CD4-positive, alpha-beta memory T cell (primary cell): ENCODE measurements at regions of chr1 and their contacts with region 1.

Region 1: DNA sequence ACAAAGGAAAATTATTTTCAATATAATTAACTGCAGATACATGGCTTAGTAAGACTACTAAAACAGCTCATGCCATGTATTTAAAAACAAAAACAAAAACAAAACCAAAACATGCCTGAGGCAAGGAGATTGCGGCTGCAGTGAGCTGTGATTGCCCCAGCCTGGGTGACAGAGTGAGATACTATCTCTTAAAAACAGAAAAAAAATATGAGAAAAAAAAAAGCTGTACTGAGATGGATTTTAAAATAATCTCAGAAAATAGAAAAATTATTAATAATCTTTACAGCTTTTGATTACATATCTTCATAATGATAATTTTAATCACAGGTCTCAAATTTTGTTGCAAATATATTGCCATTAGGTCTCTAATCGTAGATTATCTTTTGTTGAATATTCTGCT is 24.0 kb upstream of the LIN9 start:
- DNase-seq: peak in 2 of 5 donors; percentile 10 to 14
- H3K4me3 ChIP-seq: no peak overlapping the region
- H3K4me3 Mint-ChIP-seq: peak overlapping the region; percentile 45 to 81 (median 66)
- H3K27ac ChIP-seq: no peak overlapping the region
- H3K27ac Mint-ChIP-seq: peak overlapping the region in 6 of 7 donors; percentile 28 to 84 (median 61)
- H3K4me1 ChIP-seq: peaks cover 3% of the 10 kb centered on the region
- H3K4me1 Mint-ChIP-seq: peaks cover 6 to 9% (median 8%) of the 10 kb centered on the region in 4 donors
- H3K27me3 ChIP-seq: no peaks in the 10 kb centered on the region
- H3K27me3 Mint-ChIP-seq: peaks cover 0 to 2% of the 10 kb centered on the region in 2 donors

Region 2: DNA sequence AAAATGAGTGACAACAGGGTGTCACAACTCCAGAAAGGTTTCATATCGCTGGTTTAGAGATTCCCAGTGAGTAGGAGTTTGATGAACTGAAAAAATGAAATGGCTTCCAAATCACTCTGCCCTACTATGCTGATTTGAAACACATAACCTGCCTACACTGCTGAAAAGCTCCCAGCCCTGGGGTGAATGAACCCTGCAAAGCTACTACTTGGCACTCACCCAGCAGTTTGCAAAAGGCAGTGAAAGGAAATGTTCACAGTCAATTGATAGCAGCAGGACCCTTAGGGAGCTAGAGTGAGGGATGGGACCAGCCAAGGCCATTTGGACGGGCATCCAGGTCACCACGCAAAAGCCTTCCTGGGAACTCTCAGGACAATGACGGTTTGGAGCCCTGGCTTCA is 599.7 kb before region 1 on chr1:
- CTCF ChIA-PET with region 1: no interaction called
- POLR2A ChIA-PET with region 1: no interaction called
- intact Hi-C with region 1: no loop called
- DNase-seq: no peak
- H3K4me3 ChIP-seq: no peak overlapping the region
- H3K4me3 Mint-ChIP-seq: no peak overlapping the region
- H3K27ac ChIP-seq: no peak overlapping the region
- H3K27ac Mint-ChIP-seq: no peak overlapping the region
- H3K4me1 ChIP-seq: no peaks in the 10 kb centered on the region
- H3K4me1 Mint-ChIP-seq: no peaks in the 10 kb centered on the region
- H3K27me3 ChIP-seq: no peaks in the 10 kb centered on the region
- H3K27me3 Mint-ChIP-seq: peaks cover 1 to 2% of the 10 kb centered on the region in 2 donors

Region 3: DNA sequence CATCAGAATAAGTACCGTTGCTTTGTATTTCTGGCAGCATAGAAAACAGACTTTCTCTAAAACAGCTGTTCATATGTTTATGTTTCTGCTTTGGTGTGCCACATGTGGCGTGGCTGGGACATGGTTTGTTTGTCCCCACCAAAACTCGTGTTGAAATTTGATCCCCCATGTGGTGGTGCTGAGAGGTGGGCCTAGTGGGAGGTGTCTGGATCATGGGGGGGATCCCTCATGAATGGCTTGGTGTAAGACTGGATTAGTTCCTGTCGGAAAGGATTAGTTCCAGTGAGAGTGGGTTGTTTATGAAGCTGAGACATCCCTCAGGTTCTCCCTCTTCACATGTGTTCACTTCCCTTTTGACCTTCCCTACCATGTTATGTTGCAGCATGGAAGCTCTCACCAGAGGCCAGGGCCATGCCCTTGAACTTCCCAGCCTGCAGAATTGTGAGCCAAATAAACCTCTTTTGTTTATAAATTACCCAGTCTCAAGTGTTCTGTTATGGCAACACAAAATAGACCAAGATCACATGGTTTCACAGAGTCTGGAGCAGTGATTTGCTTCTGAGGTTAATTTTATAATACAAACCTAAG is 288.3 kb before region 1 on chr1:
- CTCF ChIA-PET with region 1: no interaction called
- POLR2A ChIA-PET with region 1: no interaction called
- intact Hi-C with region 1: no loop called
- DNase-seq: no peak
- H3K4me3 ChIP-seq: no peak overlapping the region
- H3K4me3 Mint-ChIP-seq: no peak overlapping the region
- H3K27ac ChIP-seq: no peak overlapping the region
- H3K27ac Mint-ChIP-seq: no peak overlapping the region
- H3K4me1 ChIP-seq: no peaks in the 10 kb centered on the region
- H3K4me1 Mint-ChIP-seq: peaks cover 0 to 9% (median 4%) of the 10 kb centered on the region in 4 donors
- H3K27me3 ChIP-seq: no peaks in the 10 kb centered on the region
- H3K27me3 Mint-ChIP-seq: peaks cover 0 to 2% of the 10 kb centered on the region in 2 donors

Region 4: GRCh38 chr1:226201029-226201593 is 131.8 kb before region 1 on chr1:
- CTCF ChIA-PET with region 1: interaction called, 6 read pairs
- POLR2A ChIA-PET with region 1: no interaction called
- intact Hi-C with region 1: loop called (anchors 2 kb)
- DNase-seq: no peak
- H3K4me3 ChIP-seq: no peak overlapping the region
- H3K4me3 Mint-ChIP-seq: no peak overlapping the region
- H3K27ac ChIP-seq: no peak overlapping the region
- H3K27ac Mint-ChIP-seq: no peak overlapping the region
- H3K4me1 ChIP-seq: no peaks in the 10 kb centered on the region
- H3K4me1 Mint-ChIP-seq: peaks cover 0 to 2% (median 0%) of the 10 kb centered on the region in 4 donors
- H3K27me3 ChIP-seq: no peaks in the 10 kb centered on the region
- H3K27me3 Mint-ChIP-seq: peaks cover 3 to 12% of the 10 kb centered on the region in 2 donors

Region 5: DNA sequence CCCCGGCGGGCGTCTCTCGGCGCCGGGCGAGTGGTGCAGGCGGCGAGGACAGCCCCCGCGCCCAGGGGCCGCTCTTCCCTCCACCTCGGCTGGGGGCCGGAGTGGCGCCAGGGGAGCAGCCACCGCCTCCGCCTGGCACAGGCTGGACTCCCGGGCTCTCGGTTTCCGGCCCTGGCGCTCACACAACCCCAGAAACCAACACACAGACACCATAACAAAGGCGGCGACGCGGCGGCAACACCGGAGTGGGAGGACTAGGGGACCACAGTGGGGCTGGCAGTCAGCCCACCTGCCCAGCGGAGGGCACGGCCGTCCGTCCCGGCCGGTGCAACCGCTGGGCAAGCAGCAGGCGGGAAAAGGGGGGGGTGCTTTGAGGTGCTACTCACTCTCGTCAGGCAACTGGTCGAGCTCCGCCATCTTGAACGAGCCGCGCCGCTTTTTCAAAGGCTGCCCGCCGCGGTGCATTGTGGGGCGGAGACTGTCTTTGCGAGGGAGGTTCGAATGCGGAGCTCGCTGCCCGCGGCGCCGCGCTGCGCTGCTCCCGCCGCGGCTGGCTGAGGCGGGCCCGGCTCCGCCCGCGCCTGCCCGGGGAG is 24.1 kb before region 1 on chr1 and contains the start of gene LIN9:
- CTCF ChIA-PET with region 1: interaction called, 16 read pairs
- POLR2A ChIA-PET with region 1: interaction called, 11 read pairs
- intact Hi-C with region 1: no loop called
- DNase-seq: peak; percentile 85 to 91 (median 87)
- H3K4me3 ChIP-seq: peak within 1 kb of the TSS; percentile 84 to 85
- H3K4me3 Mint-ChIP-seq: peak within 1 kb of the TSS; percentile 91 to 95 (median 92)
- H3K27ac ChIP-seq: peak within 1 kb of the TSS; percentile 70
- H3K27ac Mint-ChIP-seq: peak within 1 kb of the TSS; percentile 78 to 93 (median 89)
- H3K4me1 ChIP-seq: peaks cover 10% of the 10 kb centered on the region
- H3K4me1 Mint-ChIP-seq: peaks cover 12 to 20% (median 15%) of the 10 kb centered on the region in 4 donors
- H3K27me3 ChIP-seq: no peaks in the 10 kb centered on the region
- H3K27me3 Mint-ChIP-seq: peaks cover 5 to 7% of the 10 kb centered on the region in 2 donors
- total RNA-seq, gene LIN9: 5.0 to 5.5 TPM

Region 6: GRCh38 chr1:226474443-226475141 is 141.6 kb after region 1 on chr1:
- CTCF ChIA-PET with region 1: no interaction called
- POLR2A ChIA-PET with region 1: no interaction called
- intact Hi-C with region 1: no loop called
- DNase-seq: no peak
- H3K4me3 ChIP-seq: no peak overlapping the region
- H3K4me3 Mint-ChIP-seq: no peak overlapping the region
- H3K27ac ChIP-seq: no peak overlapping the region
- H3K27ac Mint-ChIP-seq: peak overlapping the region in 1 of 7 donors; percentile 39
- H3K4me1 ChIP-seq: no peaks in the 10 kb centered on the region
- H3K4me1 Mint-ChIP-seq: peaks cover 0 to 9% (median 4%) of the 10 kb centered on the region in 4 donors
- H3K27me3 ChIP-seq: no peaks in the 10 kb centered on the region
- H3K27me3 Mint-ChIP-seq: peaks cover 5 to 15% of the 10 kb centered on the region in 2 donors

Region 7: DNA sequence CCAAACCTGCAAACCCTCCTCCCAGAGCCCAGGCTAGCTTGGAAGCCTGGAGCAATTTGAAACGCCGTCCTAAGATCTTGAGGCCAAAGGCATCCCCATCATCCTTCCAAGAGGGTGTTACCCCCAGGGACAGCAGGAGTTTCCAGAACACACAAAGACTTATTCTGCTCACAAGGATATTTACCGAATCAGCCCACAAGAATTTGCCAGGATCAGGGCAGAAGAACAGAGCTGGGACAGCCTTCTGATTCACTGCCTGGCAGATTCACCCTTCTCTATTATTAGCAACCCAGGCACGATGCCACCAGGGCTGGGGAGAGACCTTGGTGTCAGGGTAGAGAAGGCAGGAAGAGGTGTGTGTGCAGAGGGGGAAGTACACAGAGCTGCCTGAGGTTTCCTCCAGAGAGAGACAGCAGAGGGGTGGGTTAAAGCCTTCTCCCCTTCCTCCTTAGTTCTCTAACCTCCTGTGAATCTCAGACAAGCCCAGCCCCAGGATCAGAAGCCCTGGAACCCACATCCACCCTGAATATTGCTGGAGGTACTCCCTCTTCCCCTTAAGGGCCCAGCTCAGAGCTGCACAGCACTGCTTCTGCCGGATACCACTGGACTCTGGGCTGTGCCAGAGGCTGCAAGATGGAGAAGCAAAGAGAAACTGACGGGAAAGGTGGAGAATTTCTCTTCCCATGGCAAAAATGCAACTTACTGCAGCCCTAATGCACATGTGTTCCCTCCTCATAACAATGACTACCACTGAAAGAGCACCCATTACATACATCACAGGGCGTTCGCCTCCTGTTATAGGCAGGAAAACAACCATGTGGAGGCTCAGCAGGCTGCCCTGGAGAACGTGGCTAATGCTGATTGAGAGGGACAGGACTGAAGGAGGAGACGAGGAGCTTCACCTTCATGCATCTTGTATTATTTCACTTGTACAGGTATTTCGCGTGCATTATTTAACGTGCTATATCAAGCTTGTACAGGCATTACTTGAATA is 344.4 kb after region 1 on chr1:
- CTCF ChIA-PET with region 1: no interaction called
- POLR2A ChIA-PET with region 1: no interaction called
- intact Hi-C with region 1: no loop called
- DNase-seq: peak; percentile 78 to 95 (median 81)
- H3K4me3 ChIP-seq: peak overlapping the region in 1 of 2 donors; percentile 41
- H3K4me3 Mint-ChIP-seq: peak overlapping the region; percentile 76 to 96 (median 86)
- H3K27ac ChIP-seq: peak overlapping the region; percentile 89
- H3K27ac Mint-ChIP-seq: peak overlapping the region; percentile 94 to 100 (median 99)
- H3K4me1 ChIP-seq: peaks cover 99% of the 10 kb centered on the region
- H3K4me1 Mint-ChIP-seq: peaks cover 85 to 100% (median 93%) of the 10 kb centered on the region in 4 donors
- H3K27me3 ChIP-seq: no peaks in the 10 kb centered on the region
- H3K27me3 Mint-ChIP-seq: peaks cover 0 to 5% of the 10 kb centered on the region in 2 donors